ENCODE measurements at regions of chr17 and their contacts with region 1.

Region 1: GRCh38 chr17:17919169-17920107 is 52.8 kb downstream of the TOM1L2 start:
- DNase-seq: peak; percentile 86 to 96
- ATAC-seq: peak; percentile 67 to 79
- H3K4me3 ChIP-seq: no peak overlapping the region
- H3K27ac ChIP-seq: peak overlapping the region; percentile 90 to 92
- H3K4me1 ChIP-seq: peaks cover 65% of the 10 kb centered on the region
- CTCF ChIP-seq: peak; percentile 96
- EP300 ChIP-seq: no peak
- POLR2A ChIP-seq: no peak
- RAD21 ChIP-seq: peak; percentile 99

Region 2: GRCh38 chr17:17812211-17813057 is 107.0 kb before region 1 on chr17:
- CTCF ChIA-PET with region 1: interaction called, 57 read pairs
- POLR2A ChIA-PET with region 1: interaction called, 7 read pairs
- DNase-seq: peak; percentile 82 to 89
- ATAC-seq: peak; percentile 1 to 46; a peak in 3 of 6 replicates
- H3K4me3 ChIP-seq: 0 out of 3 replicates have a peak overlapping the region, but pooled peaks have one; percentile 17
- H3K27ac ChIP-seq: peak overlapping the region; percentile 62 to 78
- H3K4me1 ChIP-seq: peaks cover 63% of the 10 kb centered on the region
- CTCF ChIP-seq: peak; percentile 97
- EP300 ChIP-seq: no peak
- POLR2A ChIP-seq: no peak
- RAD21 ChIP-seq: peak; percentile 90 to 94

Region 3: GRCh38 chr17:17849845-17850373 is 69.5 kb before region 1 on chr17:
- CTCF ChIA-PET with region 1: interaction called, 21 read pairs
- POLR2A ChIA-PET with region 1: no interaction called
- DNase-seq: peak in 1 of 2 experiments; percentile 44
- ATAC-seq: peak; percentile 55 to 67; a peak in 4 of 6 replicates
- H3K4me3 ChIP-seq: no peak overlapping the region
- H3K27ac ChIP-seq: peak overlapping the region; percentile 32 to 74; a peak in 4 of 6 replicates
- H3K4me1 ChIP-seq: peaks cover 19% of the 10 kb centered on the region
- CTCF ChIP-seq: no peak
- EP300 ChIP-seq: no peak
- POLR2A ChIP-seq: no peak
- RAD21 ChIP-seq: no peak

Region 4: DNA sequence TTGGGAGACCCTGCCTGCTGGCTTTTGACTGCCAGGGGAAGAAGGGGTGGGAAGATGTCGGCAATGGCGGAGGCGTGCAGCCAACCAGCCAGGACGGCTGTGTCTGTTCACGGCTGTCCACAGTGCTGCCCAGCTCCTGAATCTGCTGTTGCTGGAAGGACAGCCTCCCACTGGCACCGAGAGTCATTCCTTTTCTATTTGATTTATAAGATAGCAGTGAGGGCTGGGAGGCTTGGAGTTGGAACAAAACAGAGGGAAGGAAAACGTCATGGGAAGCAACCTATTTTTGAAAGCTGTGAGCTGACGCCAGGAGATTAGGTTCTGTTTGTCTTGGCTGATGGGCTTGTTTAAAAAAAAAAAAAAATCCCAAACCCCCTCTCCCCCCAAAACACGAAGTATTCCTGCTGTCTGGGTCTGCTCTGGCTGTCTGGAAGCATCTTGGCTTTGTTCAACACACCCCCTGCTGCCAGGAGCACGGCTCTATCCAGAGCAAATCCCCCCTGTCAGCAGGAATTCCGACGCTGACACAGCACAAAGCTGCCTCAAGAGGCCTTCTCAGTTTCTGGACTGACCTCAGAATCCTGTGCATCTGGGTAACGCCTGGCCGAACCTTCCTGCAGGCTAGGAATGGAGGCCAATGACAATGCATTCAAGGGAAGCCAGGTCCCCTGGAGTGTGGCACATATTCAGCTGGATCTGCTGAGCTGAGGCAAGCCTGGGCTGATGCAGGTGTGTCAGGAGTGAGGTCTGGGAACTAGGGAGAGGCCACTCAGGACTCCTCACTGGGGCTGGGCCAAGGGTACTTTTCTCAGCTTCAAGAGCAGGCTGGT is 41.7 kb before region 1 on chr17:
- CTCF ChIA-PET with region 1: interaction called, 313 read pairs
- POLR2A ChIA-PET with region 1: no interaction called
- DNase-seq: no peak
- ATAC-seq: no peak
- H3K4me3 ChIP-seq: no peak overlapping the region
- H3K27ac ChIP-seq: no peak overlapping the region
- H3K4me1 ChIP-seq: peaks cover 5% of the 10 kb centered on the region; the same call in 1 of the 3 replicates
- CTCF ChIP-seq: no peak
- EP300 ChIP-seq: no peak
- POLR2A ChIP-seq: no peak
- RAD21 ChIP-seq: no peak

Region 5: DNA sequence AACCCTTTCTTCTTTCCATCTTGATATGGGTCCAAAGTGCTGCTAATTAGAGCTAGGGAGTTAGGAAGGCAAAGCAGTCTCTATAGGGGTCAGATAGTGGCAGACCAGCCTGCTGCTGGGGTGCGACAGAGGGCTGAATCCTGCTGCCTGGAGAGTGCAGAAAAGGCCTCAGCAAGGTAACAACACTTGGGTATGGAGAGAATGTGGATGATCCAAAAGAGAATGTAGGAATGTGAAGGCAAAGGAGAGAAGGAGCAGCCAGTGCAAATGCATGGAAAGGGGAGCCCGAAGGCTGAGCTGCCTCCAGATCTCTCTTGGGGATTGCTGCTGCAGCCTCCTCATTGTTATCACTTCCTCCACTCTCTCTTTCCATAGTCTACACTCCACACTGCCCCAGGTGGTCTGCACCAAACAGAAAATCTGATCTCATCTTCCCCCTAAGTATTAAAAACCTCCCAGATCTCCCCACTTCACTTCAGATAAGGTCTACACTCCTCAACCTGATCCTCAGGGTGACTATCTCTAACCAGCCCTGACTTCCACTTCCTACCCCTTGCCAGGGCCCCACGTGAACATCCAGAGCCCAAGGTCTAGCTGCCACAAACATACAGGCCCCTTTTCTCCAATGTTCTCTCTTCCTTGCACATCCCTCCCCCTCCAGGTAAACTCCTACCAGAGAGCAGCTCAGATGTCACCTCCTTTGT is 24.0 kb after region 1 on chr17:
- CTCF ChIA-PET with region 1: interaction called, 19 read pairs
- POLR2A ChIA-PET with region 1: no interaction called
- DNase-seq: no peak
- ATAC-seq: peak; percentile 40 to 52; a peak in 4 of 6 replicates
- H3K4me3 ChIP-seq: no peak overlapping the region
- H3K27ac ChIP-seq: peak overlapping the region; percentile 32 to 50; a peak in 4 of 6 replicates
- H3K4me1 ChIP-seq: peaks cover 61% of the 10 kb centered on the region
- CTCF ChIP-seq: no peak
- EP300 ChIP-seq: no peak
- POLR2A ChIP-seq: no peak
- RAD21 ChIP-seq: no peak

Region 6: GRCh38 chr17:17972126-17972951 is 52.9 kb after region 1 on chr17 and contains the starts of genes DRC3 and TOM1L2:
- CTCF ChIA-PET with region 1: interaction called, 15 read pairs
- POLR2A ChIA-PET with region 1: interaction called, 6 read pairs
- DNase-seq: peak; percentile 100
- ATAC-seq: peak; percentile 93 to 96
- H3K4me3 ChIP-seq: peak within 1 kb of the TSS; percentile 69
- H3K27ac ChIP-seq: peak within 1 kb of the TSS; percentile 68 to 88
- H3K4me1 ChIP-seq: peaks cover 25% of the 10 kb centered on the region
- CTCF ChIP-seq: no peak
- EP300 ChIP-seq: no peak
- POLR2A ChIP-seq: peak; percentile 57
- RAD21 ChIP-seq: no peak
- polyA plus RNA-seq, gene DRC3: 2.9 and 3.1 TPM in 2 replicates
- polyA plus RNA-seq, gene TOM1L2: 19.0 and 19.2 TPM in 2 replicates

Region 7: GRCh38 chr17:18033442-18034099 is 114.1 kb after region 1 on chr17:
- CTCF ChIA-PET with region 1: interaction called, 30 read pairs
- POLR2A ChIA-PET with region 1: interaction called, 5 read pairs
- DNase-seq: peak; percentile 86 to 89
- ATAC-seq: peak; percentile 96 to 97
- H3K4me3 ChIP-seq: no peak overlapping the region
- H3K27ac ChIP-seq: peak overlapping the region in 1 of 2 experiments; percentile 27; a peak in 1 of 6 replicates
- H3K4me1 ChIP-seq: peaks cover 10% of the 10 kb centered on the region; the same call in 2 of the 3 replicates
- CTCF ChIP-seq: peak; percentile 93
- EP300 ChIP-seq: no peak
- POLR2A ChIP-seq: no peak
- RAD21 ChIP-seq: peak; percentile 96 to 98